Activated naive CD4-positive, alpha-beta T cell treated with anti-CD3 and anti-CD28 coated beads for 36 hours (primary cell): ENCODE measurements at regions of chr16 and their contacts with region 1.

Region 1: DNA sequence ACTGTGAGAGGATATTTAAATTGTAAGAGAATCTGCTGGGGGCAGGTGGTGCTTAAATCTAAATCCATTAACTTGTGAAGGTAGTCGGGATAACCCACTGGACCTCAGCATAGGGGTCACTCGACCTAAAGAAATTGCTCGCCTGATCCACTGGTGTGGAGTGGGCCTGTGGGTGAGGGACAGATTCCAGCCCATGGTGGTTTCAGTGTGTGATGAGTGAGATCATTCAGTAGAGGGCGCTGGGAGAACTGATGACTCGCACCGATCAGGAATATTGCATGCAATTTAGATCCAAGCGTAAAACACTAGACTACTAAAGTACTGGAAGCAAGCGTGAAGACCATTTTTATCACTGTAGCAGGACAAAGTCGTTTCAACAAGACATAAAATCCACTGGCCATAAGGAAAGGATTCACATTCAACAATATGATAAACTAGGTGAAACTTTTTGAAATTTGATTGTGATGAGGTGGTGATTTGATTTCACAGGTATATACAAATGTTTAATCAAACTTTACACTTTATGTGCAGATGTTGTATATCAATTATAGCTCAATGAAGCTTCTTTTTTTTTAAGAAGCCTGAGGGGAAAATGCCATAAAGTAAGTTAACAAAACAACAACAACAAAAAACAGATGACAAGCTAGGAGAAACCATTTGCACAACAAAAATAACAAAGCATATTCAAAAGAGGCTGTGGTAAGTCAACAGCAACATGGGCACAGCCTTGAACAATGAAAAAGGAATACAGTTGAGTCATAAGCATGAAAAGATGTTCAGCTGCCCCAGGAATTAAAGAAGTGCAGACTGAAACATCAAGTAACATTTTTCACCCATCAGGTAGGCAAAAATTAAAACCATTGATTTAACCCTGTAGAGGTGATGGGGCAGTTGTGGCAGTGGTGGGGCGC is 7.5 kb upstream of the TMEM170A start:
- DNase-seq: peak; percentile 56
- H3K4me3 Mint-ChIP-seq: no peak overlapping the region
- H3K27ac Mint-ChIP-seq: no peak overlapping the region
- H3K4me1 Mint-ChIP-seq: peaks cover 1% of the 10 kb centered on the region
- H3K27me3 Mint-ChIP-seq: no peaks in the 10 kb centered on the region

Region 2: GRCh38 chr16:75550211-75550662 is 78.3 kb after region 1 on chr16:
- CTCF ChIA-PET with region 1: interaction called, 27 read pairs
- intact Hi-C with region 1: loop called (anchors 1 kb)
- DNase-seq: peak; percentile 69
- H3K4me3 Mint-ChIP-seq: no peak overlapping the region
- H3K27ac Mint-ChIP-seq: no peak overlapping the region
- H3K4me1 Mint-ChIP-seq: peaks cover 12% of the 10 kb centered on the region
- H3K27me3 Mint-ChIP-seq: peaks cover 4% of the 10 kb centered on the region